ENCODE measurements at regions of chr15 and their contacts with region 1.

Region 1: DNA sequence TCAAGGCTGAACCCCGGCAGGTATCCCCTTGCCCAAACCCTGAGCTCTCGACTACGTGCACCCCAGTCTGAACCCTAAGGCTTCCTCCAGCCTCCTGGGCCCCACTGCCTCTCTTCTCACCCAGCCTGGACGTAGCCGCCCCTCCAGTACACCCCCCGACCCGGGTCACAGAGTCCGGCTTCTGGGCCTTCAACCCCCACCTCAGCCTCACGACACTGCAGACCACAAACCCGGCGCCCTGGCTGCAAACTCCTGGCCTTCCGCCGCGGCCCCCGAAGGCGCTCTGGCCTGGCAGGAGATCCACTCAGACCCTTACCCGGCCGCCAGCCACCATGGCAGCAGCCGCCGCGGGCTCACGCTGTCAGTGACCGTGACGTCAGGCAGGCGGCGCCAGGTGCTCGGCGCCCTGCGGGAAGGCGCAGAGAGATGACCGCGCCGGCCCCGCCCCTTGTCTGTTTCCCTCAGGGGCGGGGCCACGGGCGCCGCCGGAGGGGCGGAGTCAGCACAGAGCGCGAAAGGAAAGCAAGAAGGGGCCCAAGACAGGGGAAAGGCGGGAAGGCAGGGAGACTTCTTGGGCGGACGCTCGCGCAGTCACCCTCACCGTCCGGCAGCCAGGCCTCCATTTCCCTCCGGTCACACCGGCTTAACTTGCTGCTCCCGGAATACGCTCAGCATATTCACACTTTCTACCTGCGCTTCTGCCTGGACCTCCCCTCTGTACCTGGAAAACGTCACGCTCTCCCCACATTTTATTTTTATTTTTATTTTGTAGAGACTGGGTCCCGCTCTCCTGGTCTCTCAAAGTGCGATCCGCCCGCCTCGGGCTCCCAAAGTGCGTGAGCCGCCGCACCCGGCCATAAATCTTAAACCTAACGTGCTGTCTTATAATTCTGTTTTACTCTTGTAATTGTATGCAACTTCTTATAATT is at the start of gene RMDN3:
- DNase-seq: peak; percentile 95
- H3K4me3 ChIP-seq: peak within 1 kb of the TSS; percentile 64 to 99 (median 88)
- H3K27ac ChIP-seq: peak within 1 kb of the TSS; percentile 72 to 86 (median 85)
- H3K4me1 ChIP-seq: peaks cover 15 to 32% (median 26%) of the 10 kb centered on the region in 4 donors
- H3K27me3 ChIP-seq: no peaks in the 10 kb centered on the region
- CTCF ChIP-seq: peak in 2 of 3 experiments; percentile 17 to 41
- EP300 ChIP-seq: no peak
- POLR2A ChIP-seq: no peak
- total RNA-seq, gene RMDN3: 29.5 to 34.9 (median 31.5) TPM

Region 2: GRCh38 chr15:40564591-40565332 is 190.4 kb before region 1 on chr15 and contains the start of gene CCDC32:
- intact Hi-C with region 1: loop called (anchors 10 kb)
- DNase-seq: peak; percentile 99
- H3K4me3 ChIP-seq: peak within 1 kb of the TSS; percentile 66 to 81 (median 71)
- H3K27ac ChIP-seq: peak within 1 kb of the TSS; percentile 85 to 93 (median 92)
- H3K4me1 ChIP-seq: peaks cover 22 to 46% (median 35%) of the 10 kb centered on the region in 4 donors
- H3K27me3 ChIP-seq: no peaks in the 10 kb centered on the region
- CTCF ChIP-seq: no peak
- EP300 ChIP-seq: no peak
- POLR2A ChIP-seq: peak; percentile 26
- total RNA-seq, gene CCDC32: 24.9 to 38.3 (median 36.0) TPM

Region 3: DNA sequence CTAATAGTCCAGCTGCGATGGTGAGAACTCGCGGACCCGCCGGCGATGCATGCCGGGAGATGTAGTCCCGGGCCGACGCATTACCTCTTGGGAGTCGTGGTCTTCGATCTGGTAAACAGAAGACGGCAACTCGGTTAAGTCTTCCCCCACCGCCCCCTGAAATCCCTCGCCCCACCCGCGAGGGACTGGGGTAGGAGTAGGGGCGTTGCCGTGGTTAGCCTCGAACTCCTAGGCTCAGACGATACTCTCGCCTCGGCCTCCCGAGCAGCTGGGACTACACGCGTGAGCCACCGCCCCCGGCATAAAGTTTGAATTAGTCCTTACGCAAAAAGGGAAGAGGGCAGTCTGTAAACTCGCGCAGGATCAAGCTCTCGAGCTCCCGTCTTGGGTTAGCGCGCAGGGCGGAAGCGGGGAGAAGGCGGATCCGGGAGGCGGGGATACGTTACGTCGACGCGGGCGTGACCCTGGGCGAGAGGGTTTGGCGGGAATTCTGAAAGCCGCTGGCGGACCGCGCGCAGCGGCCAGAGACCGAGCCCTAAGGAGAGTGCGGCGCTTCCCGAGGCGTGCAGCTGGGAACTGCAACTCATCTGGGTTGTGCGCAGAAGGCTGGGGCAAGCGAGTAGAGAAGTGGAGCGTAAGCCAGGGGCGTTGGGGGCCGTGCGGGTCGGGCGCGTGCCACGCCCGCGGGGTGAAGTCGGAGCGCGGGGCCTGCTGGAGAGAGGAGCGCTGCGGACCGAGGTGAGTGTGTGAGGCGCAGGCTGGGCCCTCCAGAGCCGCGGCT is 60.3 kb before region 1 on chr15 and contains the start of gene RAD51:
- intact Hi-C with region 1: loop called (anchors 5 kb)
- DNase-seq: peak; percentile 97
- H3K4me3 ChIP-seq: peak within 1 kb of the TSS; percentile 70 to 99 (median 84)
- H3K27ac ChIP-seq: peak within 1 kb of the TSS; percentile 95 to 100 (median 98)
- H3K4me1 ChIP-seq: peaks cover 18 to 23% (median 22%) of the 10 kb centered on the region in 4 donors
- H3K27me3 ChIP-seq: no peaks in the 10 kb centered on the region
- CTCF ChIP-seq: peak in 1 of 3 experiments; percentile 13
- EP300 ChIP-seq: no peak
- POLR2A ChIP-seq: peak; percentile 12
- total RNA-seq, gene RAD51: 0.50 to 0.92 (median 0.71) TPM in 3 of 4 donors, not detected in the other

Region 4: GRCh38 chr15:40807028-40807887 is 52.1 kb after region 1 on chr15 and contains the starts of genes DNAJC17 and ZFYVE19:
- intact Hi-C with region 1: loop called (anchors 2 kb)
- DNase-seq: peak; percentile 98
- H3K4me3 ChIP-seq: peak within 1 kb of the TSS; percentile 87 to 99 (median 93)
- H3K27ac ChIP-seq: peak within 1 kb of the TSS; percentile 95 to 97 (median 96)
- H3K4me1 ChIP-seq: peaks cover 25 to 49% (median 30%) of the 10 kb centered on the region in 4 donors
- H3K27me3 ChIP-seq: no peaks in the 10 kb centered on the region
- CTCF ChIP-seq: peak in 1 of 3 experiments; percentile 21
- EP300 ChIP-seq: no peak
- POLR2A ChIP-seq: no peak
- total RNA-seq, gene DNAJC17: 10.0 to 23.8 (median 13.9) TPM
- total RNA-seq, gene ZFYVE19: 14.4 to 36.8 (median 18.8) TPM

Region 5: GRCh38 chr15:40859206-40859851 is 104.2 kb after region 1 on chr15:
- intact Hi-C with region 1: no loop called
- DNase-seq: no peak
- H3K4me3 ChIP-seq: no peak overlapping the region
- H3K27ac ChIP-seq: no peak overlapping the region
- H3K4me1 ChIP-seq: peaks cover 0 to 19% (median 6%) of the 10 kb centered on the region in 4 donors
- H3K27me3 ChIP-seq: peaks cover 0 to 51% (median 0%) of the 10 kb centered on the region in 4 donors
- CTCF ChIP-seq: peak; percentile 48 to 64 (median 48)
- EP300 ChIP-seq: no peak
- POLR2A ChIP-seq: no peak